ENCODE measurements at regions of chr5 and their contacts with region 1.

Region 1: GRCh38 chr5:132064738-132065331 is 4.4 kb downstream of the IL3 start:
- DNase-seq: peak; percentile 61 to 89 (median 71)
- H3K4me3 ChIP-seq: no peak overlapping the region
- H3K27ac ChIP-seq: no peak overlapping the region
- H3K4me1 ChIP-seq: no peaks in the 10 kb centered on the region
- H3K27me3 ChIP-seq: no peaks in the 10 kb centered on the region
- CTCF ChIP-seq: peak; percentile 77 to 92 (median 82)
- POLR2A ChIP-seq: no peak

Region 2: GRCh38 chr5:131589510-131590348 is 475.1 kb before region 1 on chr5:
- intact Hi-C with region 1: loop called in 1 of 2 experiments (anchors 5 kb)
- DNase-seq: peak in 3 of 7 donors; percentile 11 to 36 (median 16)
- H3K4me3 ChIP-seq: no peak overlapping the region
- H3K27ac ChIP-seq: no peak overlapping the region
- H3K4me1 ChIP-seq: peaks cover 0 to 7% of the 10 kb centered on the region in 2 donors
- H3K27me3 ChIP-seq: no peaks in the 10 kb centered on the region
- CTCF ChIP-seq: peak; percentile 75 to 97 (median 90)
- POLR2A ChIP-seq: no peak

Region 3: GRCh38 chr5:132134384-132134783 is 69.5 kb after region 1 on chr5:
- intact Hi-C with region 1: loop called in 1 of 2 experiments (anchors 5 kb)
- DNase-seq: no peak
- H3K4me3 ChIP-seq: no peak overlapping the region
- H3K27ac ChIP-seq: no peak overlapping the region
- H3K4me1 ChIP-seq: no peaks in the 10 kb centered on the region
- H3K27me3 ChIP-seq: no peaks in the 10 kb centered on the region
- CTCF ChIP-seq: peak in 3 of 6 experiments; percentile 21 to 31 (median 23)
- POLR2A ChIP-seq: no peak

Measured in adrenal gland (tissue), 19 donors.